ENCODE measurements at regions of chr9 and their contacts with region 1.

Region 1: GRCh38 chr9:32552172-32552872 is at the starts of genes SMIM27 and TOPORS:
- DNase-seq: peak; percentile 92 to 95
- ATAC-seq: peak; percentile 96 to 97 (median 96)
- H3K4me3 ChIP-seq: peak within 1 kb of the TSS; percentile 87
- H3K27ac ChIP-seq: peak within 1 kb of the TSS; percentile 95
- H3K4me1 ChIP-seq: peaks cover 23% of the 10 kb centered on the region
- H3K27me3 ChIP-seq: no peaks in the 10 kb centered on the region
- CTCF ChIP-seq: no peak
- total RNA-seq, gene SMIM27: 11.7 to 21.6 (median 16.1) TPM
- total RNA-seq, gene TOPORS: 7.2 to 12.1 (median 9.1) TPM

Region 2: GRCh38 chr9:32571969-32572899 is 19.9 kb after region 1 on chr9:
- intact Hi-C with region 1: loop called in 1 of 2 experiments (anchors 2 kb)
- DNase-seq: peak in 1 of 2 donors; percentile 46
- ATAC-seq: peak; percentile 84 to 91 (median 87)
- H3K4me3 ChIP-seq: peak overlapping the region; percentile 91
- H3K27ac ChIP-seq: peak overlapping the region; percentile 92
- H3K4me1 ChIP-seq: peaks cover 19% of the 10 kb centered on the region
- H3K27me3 ChIP-seq: no peaks in the 10 kb centered on the region
- CTCF ChIP-seq: peak; percentile 61

Region 3: GRCh38 chr9:32596096-32596865 is 44.0 kb after region 1 on chr9:
- intact Hi-C with region 1: no loop called
- DNase-seq: no peak
- ATAC-seq: no peak
- H3K4me3 ChIP-seq: no peak overlapping the region
- H3K27ac ChIP-seq: no peak overlapping the region
- H3K4me1 ChIP-seq: no peaks in the 10 kb centered on the region
- H3K27me3 ChIP-seq: no peaks in the 10 kb centered on the region
- CTCF ChIP-seq: no peak

Region 4: GRCh38 chr9:32618261-32618660 is 65.9 kb after region 1 on chr9:
- intact Hi-C with region 1: no loop called
- DNase-seq: no peak
- ATAC-seq: no peak
- H3K4me3 ChIP-seq: no peak overlapping the region
- H3K27ac ChIP-seq: no peak overlapping the region
- H3K4me1 ChIP-seq: no peaks in the 10 kb centered on the region
- H3K27me3 ChIP-seq: no peaks in the 10 kb centered on the region
- CTCF ChIP-seq: no peak